CD4-positive, alpha-beta T cell (primary cell): ENCODE measurements at regions of chr2 and their contacts with region 1.

Region 1: GRCh38 chr2:10408649-10409579 is 39.2 kb downstream of the ODC1 start:
- DNase-seq: peak; percentile 70 to 92 (median 78)
- ATAC-seq: peak; percentile 90
- H3K4me3 ChIP-seq: no peak overlapping the region
- H3K4me3 Mint-ChIP-seq: peak overlapping the region; percentile 83
- H3K27ac ChIP-seq: peak overlapping the region in 1 of 2 donors; percentile 55
- H3K27ac Mint-ChIP-seq: peak overlapping the region; percentile 87
- H3K4me1 ChIP-seq: peaks cover 51% of the 10 kb centered on the region
- H3K4me1 Mint-ChIP-seq: peaks cover 38% of the 10 kb centered on the region
- H3K27me3 ChIP-seq: no peaks in the 10 kb centered on the region
- H3K27me3 Mint-ChIP-seq: no peaks in the 10 kb centered on the region
- CTCF ChIP-seq: peak; percentile 94

Region 2: DNA sequence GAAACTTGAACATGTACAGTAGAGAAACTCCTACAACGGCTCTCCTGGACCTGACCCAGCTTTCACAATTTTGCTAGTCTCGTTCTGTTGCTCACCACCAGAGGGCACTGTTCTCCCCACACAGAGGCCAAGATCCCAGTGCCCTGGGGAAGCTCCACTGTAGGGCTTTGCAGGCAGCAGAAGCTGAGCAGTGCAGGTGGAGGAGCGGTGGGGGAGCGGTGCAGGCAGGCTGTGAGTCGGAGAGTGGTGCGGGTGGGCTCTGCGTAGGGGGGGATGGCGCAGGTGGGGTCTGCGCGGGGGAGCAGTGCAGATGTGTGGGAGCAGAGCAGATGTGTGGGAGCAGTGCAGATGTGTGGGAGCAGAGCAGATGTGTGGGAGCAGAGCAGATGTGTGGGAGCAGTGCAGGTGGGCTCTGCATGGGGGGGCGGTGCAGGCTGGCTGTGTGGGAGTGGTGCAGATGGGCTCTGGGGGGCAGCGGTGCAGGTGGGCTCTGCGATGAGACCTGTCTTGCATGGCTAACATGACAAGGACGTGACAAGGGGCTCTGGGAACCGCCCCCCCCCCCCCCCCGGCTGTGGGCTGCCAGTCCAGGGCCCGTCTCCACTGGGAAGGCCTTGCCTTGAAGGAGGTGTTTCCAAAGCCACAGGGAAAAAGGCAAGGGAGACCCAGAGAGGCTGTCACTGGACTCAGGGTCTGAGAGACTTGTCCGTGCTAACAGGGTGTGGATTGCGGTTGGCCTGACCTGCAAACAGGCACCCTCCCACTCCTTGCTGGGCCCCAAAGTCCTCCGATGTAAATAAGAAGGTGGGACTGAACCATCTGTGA is 336.0 kb before region 1 on chr2:
- CTCF ChIA-PET with region 1: interaction called, 19 read pairs
- POLR2A ChIA-PET with region 1: no interaction called
- intact Hi-C with region 1: loop called in 1 of 2 experiments (anchors 10 kb)
- DNase-seq: peak; percentile 61 to 91 (median 70)
- ATAC-seq: peak; percentile 98
- H3K4me3 ChIP-seq: no peak overlapping the region
- H3K4me3 Mint-ChIP-seq: no peak overlapping the region
- H3K27ac ChIP-seq: no peak overlapping the region
- H3K27ac Mint-ChIP-seq: no peak overlapping the region
- H3K4me1 ChIP-seq: peaks cover 5% of the 10 kb centered on the region
- H3K4me1 Mint-ChIP-seq: peaks cover 5% of the 10 kb centered on the region
- H3K27me3 ChIP-seq: peaks cover 20 to 36% of the 10 kb centered on the region in 2 experiments
- H3K27me3 Mint-ChIP-seq: peaks cover 47% of the 10 kb centered on the region
- CTCF ChIP-seq: peak; percentile 73

Region 3: GRCh38 chr2:10269711-10270610 is 139.0 kb before region 1 on chr2:
- CTCF ChIA-PET with region 1: interaction called, 6 read pairs
- POLR2A ChIA-PET with region 1: no interaction called
- intact Hi-C with region 1: loop called (anchors 1 kb)
- DNase-seq: no peak
- ATAC-seq: no peak
- H3K4me3 ChIP-seq: no peak overlapping the region
- H3K4me3 Mint-ChIP-seq: no peak overlapping the region
- H3K27ac ChIP-seq: no peak overlapping the region
- H3K27ac Mint-ChIP-seq: no peak overlapping the region
- H3K4me1 ChIP-seq: peaks cover 10% of the 10 kb centered on the region
- H3K4me1 Mint-ChIP-seq: no peaks in the 10 kb centered on the region
- H3K27me3 ChIP-seq: no peaks in the 10 kb centered on the region
- H3K27me3 Mint-ChIP-seq: no peaks in the 10 kb centered on the region
- CTCF ChIP-seq: no peak

Region 4: GRCh38 chr2:10331027-10331701 is 77.8 kb before region 1 on chr2:
- CTCF ChIA-PET with region 1: interaction called, 12 read pairs
- POLR2A ChIA-PET with region 1: interaction called, 51 read pairs
- intact Hi-C with region 1: loop called in 1 of 2 experiments (anchors 2 kb)
- DNase-seq: peak; percentile 54 to 87 (median 74)
- ATAC-seq: peak; percentile 65
- H3K4me3 ChIP-seq: peak overlapping the region; percentile 74
- H3K4me3 Mint-ChIP-seq: peak overlapping the region; percentile 91
- H3K27ac ChIP-seq: peak overlapping the region; percentile 90 to 95
- H3K27ac Mint-ChIP-seq: peak overlapping the region; percentile 94
- H3K4me1 ChIP-seq: peaks cover 77% of the 10 kb centered on the region
- H3K4me1 Mint-ChIP-seq: peaks cover 89% of the 10 kb centered on the region
- H3K27me3 ChIP-seq: no peaks in the 10 kb centered on the region
- H3K27me3 Mint-ChIP-seq: no peaks in the 10 kb centered on the region
- CTCF ChIP-seq: no peak

Region 5: DNA sequence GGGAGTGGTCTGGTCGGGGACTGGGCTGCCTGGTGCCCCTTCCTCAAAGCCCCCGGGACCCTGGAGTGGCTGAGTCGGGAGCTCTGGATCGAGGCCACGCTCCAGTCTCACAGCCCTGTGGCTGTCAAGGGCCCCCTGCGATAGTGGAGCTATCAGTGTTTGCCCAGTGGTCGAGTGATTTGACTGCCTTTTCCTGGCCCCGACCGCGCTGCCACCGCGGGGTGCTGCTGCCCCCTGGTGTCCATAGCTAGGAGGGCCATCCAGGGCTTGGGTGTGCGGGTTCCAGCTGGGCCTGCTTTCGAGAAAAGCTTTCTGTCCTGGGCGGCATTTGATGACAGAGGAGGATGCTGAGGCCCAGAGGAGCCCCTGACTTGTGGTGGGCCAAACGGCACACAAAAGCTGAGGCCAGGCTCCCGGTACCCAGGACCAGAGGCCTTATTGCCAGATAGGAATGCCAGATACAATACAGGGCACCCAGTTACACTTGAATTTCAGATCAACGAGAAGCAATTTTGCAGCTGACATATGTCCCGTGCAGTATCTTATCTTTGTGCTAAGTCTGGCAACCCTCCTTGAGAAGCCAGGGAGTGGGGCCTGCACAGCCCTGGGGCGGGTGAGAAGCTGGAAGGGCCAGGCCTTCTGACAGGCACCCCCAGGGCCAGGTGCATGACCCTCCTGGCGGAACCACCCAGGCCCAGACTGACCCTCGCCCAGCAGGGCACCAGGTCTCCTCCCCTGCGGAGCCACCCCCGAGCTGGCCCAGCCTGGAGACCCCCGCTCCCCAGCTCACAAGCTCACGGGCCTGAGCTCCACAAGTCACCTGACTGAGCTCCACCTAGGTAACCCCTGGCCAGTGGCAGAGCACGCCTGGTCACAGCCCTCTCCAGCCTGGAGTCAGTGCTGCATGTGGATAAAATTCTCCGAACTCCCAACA is 26.2 kb after region 1 on chr2:
- CTCF ChIA-PET with region 1: interaction called, 23 read pairs
- POLR2A ChIA-PET with region 1: interaction called, 3 read pairs
- intact Hi-C with region 1: loop called (anchors 2 kb)
- DNase-seq: peak in 13 of 14 experiments; percentile 50 to 87 (median 65)
- ATAC-seq: peak; percentile 56
- H3K4me3 ChIP-seq: no peak overlapping the region
- H3K4me3 Mint-ChIP-seq: peak overlapping the region; percentile 64
- H3K27ac ChIP-seq: no peak overlapping the region
- H3K27ac Mint-ChIP-seq: no peak overlapping the region
- H3K4me1 ChIP-seq: peaks cover 23% of the 10 kb centered on the region
- H3K4me1 Mint-ChIP-seq: peaks cover 9% of the 10 kb centered on the region
- H3K27me3 ChIP-seq: peaks cover 0 to 6% of the 10 kb centered on the region in 2 experiments
- H3K27me3 Mint-ChIP-seq: no peaks in the 10 kb centered on the region
- CTCF ChIP-seq: peak; percentile 91